ENCODE measurements at regions of chr2 and their contacts with region 1.

Region 1: GRCh38 chr2:9813312-9814133 is 29.8 kb upstream of the TAF1B start:
- DNase-seq: peak; percentile 77 to 90
- H3K4me3 ChIP-seq: peak overlapping the region in 3 of 4 donors; percentile 12 to 34 (median 16)
- H3K27ac ChIP-seq: no peak overlapping the region
- H3K4me1 ChIP-seq: peaks cover 6 to 33% (median 22%) of the 10 kb centered on the region in 4 donors
- H3K27me3 ChIP-seq: peaks cover 0 to 6% (median 0%) of the 10 kb centered on the region in 3 donors
- CTCF ChIP-seq: peak in 6 of 7 experiments; percentile 20 to 96 (median 88)
- EP300 ChIP-seq: no peak
- POLR2A ChIP-seq: no peak

Region 2: GRCh38 chr2:10057231-10058107 is 243.9 kb after region 1 on chr2:
- intact Hi-C with region 1: loop called (anchors 10 kb)
- DNase-seq: peak; percentile 57 to 88
- H3K4me3 ChIP-seq: peak overlapping the region; percentile 20 to 37 (median 26)
- H3K27ac ChIP-seq: peak overlapping the region; percentile 34 to 83 (median 71)
- H3K4me1 ChIP-seq: peaks cover 23 to 56% (median 43%) of the 10 kb centered on the region in 4 donors
- H3K27me3 ChIP-seq: no peaks in the 10 kb centered on the region
- CTCF ChIP-seq: no peak
- EP300 ChIP-seq: no peak
- POLR2A ChIP-seq: no peak